ENCODE measurements at regions of chr16 and their contacts with region 1.

Region 1: GRCh38 chr16:70653809-70654771 is 7.7 kb downstream of the IL34 start:
- DNase-seq: peak; percentile 70 to 89 (median 86)
- H3K4me3 ChIP-seq: peak overlapping the region; percentile 13
- H3K27ac ChIP-seq: no peak overlapping the region
- H3K4me1 ChIP-seq: no peaks in the 10 kb centered on the region
- H3K27me3 ChIP-seq: no peaks in the 10 kb centered on the region
- CTCF ChIP-seq: peak; percentile 76 to 93 (median 89)
- EP300 ChIP-seq: no peak
- POLR2A ChIP-seq: no peak

Region 2: GRCh38 chr16:70364399-70364798 is 289.7 kb before region 1 on chr16:
- intact Hi-C with region 1: loop called in 1 of 4 experiments (anchors 10 kb)
- DNase-seq: no peak
- H3K4me3 ChIP-seq: no peak overlapping the region
- H3K27ac ChIP-seq: no peak overlapping the region
- H3K4me1 ChIP-seq: no peaks in the 10 kb centered on the region
- H3K27me3 ChIP-seq: no peaks in the 10 kb centered on the region
- CTCF ChIP-seq: no peak
- EP300 ChIP-seq: no peak
- POLR2A ChIP-seq: no peak

Region 3: DNA sequence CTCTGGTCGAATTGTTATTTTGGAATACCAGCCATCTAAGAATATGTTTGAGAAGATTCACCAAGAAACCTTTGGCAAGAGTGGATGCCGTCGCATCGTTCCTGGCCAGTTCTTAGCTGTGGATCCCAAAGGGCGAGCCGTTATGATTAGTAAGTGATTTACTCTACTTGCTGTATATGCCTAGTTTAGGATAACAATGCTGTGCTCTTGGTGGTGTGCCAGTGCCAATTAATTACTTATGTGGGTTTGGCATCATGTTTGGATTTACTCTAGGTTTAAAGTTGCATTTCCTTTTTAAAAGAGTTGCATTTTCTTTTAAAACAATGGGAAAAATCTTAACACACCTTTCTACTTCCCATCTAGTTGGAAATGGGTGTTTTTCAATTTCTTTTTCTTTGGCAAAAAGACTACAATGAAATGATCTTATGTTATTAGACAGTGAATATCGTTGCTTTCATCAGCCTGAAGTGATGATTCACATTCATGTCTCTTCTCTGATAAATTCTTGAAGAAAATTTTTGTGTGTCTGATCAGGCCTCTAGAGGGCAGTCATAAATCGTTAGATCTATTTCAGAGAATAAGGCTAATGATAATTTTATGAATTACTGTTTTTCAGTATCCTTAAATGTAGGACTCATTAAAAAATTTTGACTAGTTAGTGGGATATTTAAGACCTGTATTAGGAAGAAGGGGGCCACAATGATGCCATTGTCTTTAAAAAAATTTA is 124.9 kb before region 1 on chr16:
- intact Hi-C with region 1: loop called in 2 of 4 experiments (anchors 5 kb)
- DNase-seq: no peak
- H3K4me3 ChIP-seq: no peak overlapping the region
- H3K27ac ChIP-seq: no peak overlapping the region
- H3K4me1 ChIP-seq: peaks cover 6% of the 10 kb centered on the region
- H3K27me3 ChIP-seq: no peaks in the 10 kb centered on the region
- CTCF ChIP-seq: peak in 1 of 3 donors; percentile 35
- EP300 ChIP-seq: no peak
- POLR2A ChIP-seq: no peak

Region 4: DNA sequence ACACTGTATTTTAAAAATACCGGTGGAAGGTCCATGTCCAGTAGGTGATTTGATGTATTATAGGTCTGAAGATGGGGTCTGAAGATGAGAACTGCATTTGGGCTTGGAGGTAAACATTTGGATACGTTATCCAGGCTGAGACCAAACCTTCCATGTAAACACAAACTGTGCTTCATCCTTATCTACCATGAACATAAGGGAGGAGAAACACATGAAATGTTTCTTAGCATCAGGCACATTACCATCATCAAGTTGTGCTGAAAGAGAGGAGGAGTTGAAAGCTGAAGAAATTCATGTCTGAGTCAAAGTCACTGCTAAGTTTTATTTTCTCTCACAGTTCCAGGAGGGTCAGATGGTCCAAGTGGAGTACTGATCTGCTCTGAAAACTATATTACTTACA is 119.1 kb before region 1 on chr16:
- intact Hi-C with region 1: loop called in 1 of 4 experiments (anchors 5 kb)
- DNase-seq: no peak
- H3K4me3 ChIP-seq: no peak overlapping the region
- H3K27ac ChIP-seq: no peak overlapping the region
- H3K4me1 ChIP-seq: peaks cover 4% of the 10 kb centered on the region
- H3K27me3 ChIP-seq: no peaks in the 10 kb centered on the region
- CTCF ChIP-seq: no peak
- EP300 ChIP-seq: no peak
- POLR2A ChIP-seq: no peak

Region 5: GRCh38 chr16:70715055-70715858 is 61.2 kb after region 1 on chr16:
- intact Hi-C with region 1: no loop called
- DNase-seq: peak; percentile 88 to 90 (median 89)
- H3K4me3 ChIP-seq: no peak overlapping the region
- H3K27ac ChIP-seq: peak overlapping the region; percentile 41 to 85
- H3K4me1 ChIP-seq: peaks cover 24% of the 10 kb centered on the region
- H3K27me3 ChIP-seq: no peaks in the 10 kb centered on the region
- CTCF ChIP-seq: peak in 1 of 3 donors; percentile 35
- EP300 ChIP-seq: no peak
- POLR2A ChIP-seq: peak; percentile 8

Measured in ovary (tissue), 10 donors.